ENCODE measurements at regions of chr1 and their contacts with region 1.

Region 1: DNA sequence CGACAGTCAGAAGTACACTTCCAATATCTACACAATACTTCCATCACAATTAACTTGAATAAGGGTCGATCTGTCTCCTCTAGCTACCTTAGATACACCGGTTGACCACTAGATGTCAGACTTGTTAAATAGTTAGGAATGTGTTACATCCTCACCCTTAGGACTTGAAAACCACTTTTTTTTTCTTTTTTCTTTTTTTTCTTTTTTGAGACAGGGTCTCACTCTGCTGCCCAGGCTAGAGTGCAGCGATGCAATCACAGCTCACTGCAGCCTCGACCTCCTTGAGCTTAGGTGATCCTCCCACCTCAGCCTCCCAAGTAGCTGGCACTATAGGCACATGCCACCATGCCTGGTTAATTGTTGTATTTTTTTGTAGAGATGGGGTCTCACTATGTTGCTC is 120.4 kb upstream of the GREM2 start:
- DNase-seq: peak; percentile 86
- H3K4me3 Mint-ChIP-seq: no peak overlapping the region
- H3K27ac Mint-ChIP-seq: no peak overlapping the region
- H3K4me1 Mint-ChIP-seq: peaks cover 6% of the 10 kb centered on the region
- H3K27me3 Mint-ChIP-seq: no peaks in the 10 kb centered on the region
- CTCF ChIP-seq: peak; percentile 92

Region 2: DNA sequence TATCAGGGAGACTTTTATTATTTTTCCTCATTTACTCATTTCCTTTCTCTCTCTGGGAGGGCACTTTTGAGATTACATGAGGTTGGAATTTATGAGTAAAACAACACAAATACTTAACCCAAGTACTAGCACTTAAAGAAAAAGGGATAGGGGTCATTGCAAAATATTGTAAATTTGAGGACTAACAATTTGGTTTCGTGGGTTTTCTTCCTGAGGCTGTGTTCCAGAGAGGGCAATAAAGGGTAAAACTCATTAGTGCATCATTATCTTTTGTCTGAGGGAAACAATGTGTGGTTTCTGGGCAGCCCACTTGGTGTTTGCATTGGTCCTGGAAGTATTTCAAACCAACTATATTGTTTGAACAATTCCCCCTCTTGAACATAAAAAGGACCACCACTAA is 216.9 kb before region 1 on chr1:
- CTCF ChIA-PET with region 1: no interaction called
- POLR2A ChIA-PET with region 1: no interaction called
- intact Hi-C with region 1: no loop called
- DNase-seq: no peak
- H3K4me3 Mint-ChIP-seq: no peak overlapping the region
- H3K27ac Mint-ChIP-seq: no peak overlapping the region
- H3K4me1 Mint-ChIP-seq: no peaks in the 10 kb centered on the region
- H3K27me3 Mint-ChIP-seq: no peaks in the 10 kb centered on the region
- CTCF ChIP-seq: no peak

Region 3: DNA sequence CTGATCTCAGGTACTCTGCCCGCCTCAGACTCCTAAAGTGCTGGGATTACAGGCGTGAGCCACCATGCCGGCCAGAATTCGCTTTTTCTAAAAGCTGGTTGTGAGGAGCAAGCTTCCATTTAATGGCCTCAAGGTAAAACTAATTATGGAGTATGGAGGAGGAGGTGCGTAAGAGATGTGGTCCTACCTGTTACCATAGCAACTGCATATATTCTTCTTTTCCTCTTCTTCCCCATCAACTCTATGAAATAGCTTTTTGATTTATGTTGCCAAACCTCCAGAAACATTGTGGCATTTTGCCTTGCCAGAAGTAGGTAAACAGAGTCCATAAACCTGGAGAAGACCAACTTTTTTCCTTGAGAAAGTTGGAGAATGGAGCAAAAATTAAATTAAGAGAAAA is 15.4 kb before region 1 on chr1:
- CTCF ChIA-PET with region 1: interaction called, 30 read pairs
- POLR2A ChIA-PET with region 1: no interaction called
- intact Hi-C with region 1: no loop called
- DNase-seq: no peak
- H3K4me3 Mint-ChIP-seq: no peak overlapping the region
- H3K27ac Mint-ChIP-seq: no peak overlapping the region
- H3K4me1 Mint-ChIP-seq: peaks cover 5% of the 10 kb centered on the region
- H3K27me3 Mint-ChIP-seq: no peaks in the 10 kb centered on the region
- CTCF ChIP-seq: no peak

Region 4: DNA sequence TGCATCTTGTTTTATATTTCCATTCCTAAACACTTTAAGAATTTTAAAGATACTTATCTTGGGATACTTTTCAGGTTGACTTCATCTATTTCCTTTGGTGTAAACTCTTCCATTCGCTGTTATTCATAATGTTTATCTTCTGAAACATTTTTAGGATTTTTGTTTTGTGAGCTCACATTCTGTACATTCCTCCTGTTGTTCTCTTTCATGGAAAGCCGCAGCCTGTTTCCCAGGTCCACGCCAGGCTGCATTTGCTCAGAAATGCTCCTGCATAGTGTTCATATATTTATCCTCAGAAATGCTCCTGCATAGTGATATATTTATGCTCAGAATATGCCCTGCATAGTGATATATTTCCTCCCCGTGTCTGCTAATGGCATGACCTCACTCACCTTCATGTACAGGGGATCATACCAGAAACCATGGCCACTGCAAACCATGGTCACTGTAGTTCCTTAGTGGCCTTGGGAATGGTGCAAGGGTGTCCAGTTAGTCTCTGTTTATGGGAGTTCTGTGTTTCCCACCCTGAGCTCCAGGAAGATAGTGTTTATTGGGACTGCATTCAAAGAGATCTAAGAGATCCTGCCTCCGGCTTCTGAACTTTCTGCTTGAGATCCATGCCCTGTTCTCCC is 33.5 kb after region 1 on chr1:
- CTCF ChIA-PET with region 1: interaction called, 11 read pairs
- POLR2A ChIA-PET with region 1: no interaction called
- intact Hi-C with region 1: no loop called
- DNase-seq: peak; percentile 43
- H3K4me3 Mint-ChIP-seq: peak overlapping the region; percentile 1
- H3K27ac Mint-ChIP-seq: peak overlapping the region; percentile 52
- H3K4me1 Mint-ChIP-seq: peaks cover 25% of the 10 kb centered on the region
- H3K27me3 Mint-ChIP-seq: no peaks in the 10 kb centered on the region
- CTCF ChIP-seq: no peak

Region 5: GRCh38 chr1:240854367-240854766 is 122.0 kb after region 1 on chr1:
- CTCF ChIA-PET with region 1: interaction called, 62 read pairs
- POLR2A ChIA-PET with region 1: interaction called, 3 read pairs
- intact Hi-C with region 1: loop called (anchors 1 kb)
- DNase-seq: peak; percentile 79
- H3K4me3 Mint-ChIP-seq: no peak overlapping the region
- H3K27ac Mint-ChIP-seq: no peak overlapping the region
- H3K4me1 Mint-ChIP-seq: no peaks in the 10 kb centered on the region
- H3K27me3 Mint-ChIP-seq: no peaks in the 10 kb centered on the region
- CTCF ChIP-seq: peak; percentile 49

Region 6: GRCh38 chr1:240956020-240956419 is 223.6 kb after region 1 on chr1:
- CTCF ChIA-PET with region 1: interaction called, 137 read pairs
- POLR2A ChIA-PET with region 1: no interaction called
- intact Hi-C with region 1: no loop called
- DNase-seq: no peak
- H3K4me3 Mint-ChIP-seq: no peak overlapping the region
- H3K27ac Mint-ChIP-seq: no peak overlapping the region
- H3K4me1 Mint-ChIP-seq: no peaks in the 10 kb centered on the region
- H3K27me3 Mint-ChIP-seq: no peaks in the 10 kb centered on the region
- CTCF ChIP-seq: no peak

Region 7: GRCh38 chr1:241499910-241500309 is 767.5 kb after region 1 on chr1:
- CTCF ChIA-PET with region 1: interaction called, 25 read pairs
- POLR2A ChIA-PET with region 1: no interaction called
- intact Hi-C with region 1: loop called (anchors 1 kb)
- DNase-seq: peak; percentile 65
- H3K4me3 Mint-ChIP-seq: no peak overlapping the region
- H3K27ac Mint-ChIP-seq: no peak overlapping the region
- H3K4me1 Mint-ChIP-seq: no peaks in the 10 kb centered on the region
- H3K27me3 Mint-ChIP-seq: no peaks in the 10 kb centered on the region
- CTCF ChIP-seq: peak; percentile 84

Region 8: GRCh38 chr1:241598249-241598648 is 865.9 kb after region 1 on chr1:
- CTCF ChIA-PET with region 1: no interaction called
- POLR2A ChIA-PET with region 1: no interaction called
- intact Hi-C with region 1: no loop called
- DNase-seq: no peak
- H3K4me3 Mint-ChIP-seq: no peak overlapping the region
- H3K27ac Mint-ChIP-seq: no peak overlapping the region
- H3K4me1 Mint-ChIP-seq: peaks cover 41% of the 10 kb centered on the region
- H3K27me3 Mint-ChIP-seq: no peaks in the 10 kb centered on the region
- CTCF ChIP-seq: no peak

Measured in MCF 10A (cell line).